Caco-2 (cell line): ENCODE measurements at regions of chr13 and their contacts with region 1.

Region 1: DNA sequence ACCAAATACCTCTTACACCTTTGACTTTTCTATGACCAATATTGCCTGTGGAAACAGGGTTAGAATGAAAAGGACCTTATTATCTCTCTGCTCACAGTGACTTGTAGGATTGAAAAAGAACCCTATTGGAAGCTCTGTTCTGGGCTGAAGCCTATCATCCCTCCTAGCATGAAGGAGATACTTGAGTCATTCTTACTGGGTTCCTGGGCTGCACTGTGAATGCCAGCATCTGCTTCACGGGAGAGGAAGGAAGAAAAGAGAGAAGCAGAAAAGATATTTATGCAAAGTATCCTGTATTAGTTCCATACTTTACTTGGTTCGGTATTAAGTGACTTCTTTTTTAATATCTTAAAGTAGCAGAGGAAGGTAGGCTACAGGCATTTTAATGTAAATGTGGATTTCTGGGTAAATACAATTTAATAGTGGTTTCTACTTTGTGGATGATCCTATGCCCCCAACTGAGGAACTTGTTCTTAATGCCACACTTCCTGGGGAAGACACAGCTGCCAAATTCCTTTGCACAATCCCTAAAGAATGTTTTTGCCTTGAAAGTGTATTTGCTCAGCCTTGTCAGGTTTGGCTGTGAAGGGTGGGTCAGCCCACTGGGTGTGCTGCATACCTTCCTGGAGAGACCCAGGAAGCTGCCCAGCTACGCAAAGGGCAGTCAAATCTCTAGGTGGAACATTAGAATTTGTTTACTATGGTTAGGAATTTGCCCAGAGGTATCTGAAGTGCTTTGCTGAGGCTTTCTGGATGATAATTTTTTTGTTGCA is 13.7 kb upstream of the SCEL start:
- DNase-seq: peak; percentile 77 to 85
- H3K4me3 ChIP-seq: no peak overlapping the region
- H3K4me3 Mint-ChIP-seq: no peak overlapping the region
- H3K27ac Mint-ChIP-seq: peak overlapping the region; percentile 86
- H3K4me1 ChIP-seq: peaks cover 23% of the 10 kb centered on the region
- H3K4me1 Mint-ChIP-seq: peaks cover 25% of the 10 kb centered on the region
- H3K27me3 ChIP-seq: no peaks in the 10 kb centered on the region
- H3K27me3 Mint-ChIP-seq: no peaks in the 10 kb centered on the region
- CTCF ChIP-seq: peak in 1 of 2 experiments; percentile 40

Region 2: GRCh38 chr13:77492982-77493381 is 28.8 kb before region 1 on chr13:
- CTCF ChIA-PET with region 1: interaction called, 3 read pairs
- POLR2A ChIA-PET with region 1: no interaction called
- intact Hi-C with region 1: loop called (anchors 2 kb)
- DNase-seq: peak in 1 of 2 experiments; percentile 41
- H3K4me3 ChIP-seq: no peak overlapping the region
- H3K4me3 Mint-ChIP-seq: no peak overlapping the region
- H3K27ac Mint-ChIP-seq: no peak overlapping the region
- H3K4me1 ChIP-seq: no peaks in the 10 kb centered on the region
- H3K4me1 Mint-ChIP-seq: peaks cover 7% of the 10 kb centered on the region
- H3K27me3 ChIP-seq: no peaks in the 10 kb centered on the region
- H3K27me3 Mint-ChIP-seq: peaks cover 2% of the 10 kb centered on the region
- CTCF ChIP-seq: peak; percentile 35 to 59

Region 3: GRCh38 chr13:77535448-77535847 is 13.7 kb after region 1 on chr13 and contains the start of gene SCEL:
- CTCF ChIA-PET with region 1: interaction called, 3 read pairs
- POLR2A ChIA-PET with region 1: no interaction called
- intact Hi-C with region 1: loop called (anchors 1 kb)
- DNase-seq: peak; percentile 40 to 69
- H3K4me3 ChIP-seq: no peak within 1 kb of the TSS
- H3K4me3 Mint-ChIP-seq: peak within 1 kb of the TSS; percentile 58
- H3K27ac Mint-ChIP-seq: peak within 1 kb of the TSS; percentile 56
- H3K4me1 ChIP-seq: peaks cover 42% of the 10 kb centered on the region
- H3K4me1 Mint-ChIP-seq: peaks cover 18% of the 10 kb centered on the region
- H3K27me3 ChIP-seq: no peaks in the 10 kb centered on the region
- H3K27me3 Mint-ChIP-seq: peaks cover 2% of the 10 kb centered on the region
- CTCF ChIP-seq: no peak
- total RNA-seq, gene SCEL: 2.8 and 3.5 TPM in 2 replicates